GM12878 (cell line): ENCODE measurements at regions of chr1 and their contacts with region 1.

Region 1: GRCh38 chr1:165827268-165828102 is at the start of gene UCK2:
- DNase-seq: no peak
- ATAC-seq: peak; percentile 87
- H3K4me3 ChIP-seq: peak within 1 kb of the TSS; percentile 86
- H3K27ac ChIP-seq: peak within 1 kb of the TSS; percentile 86
- H3K4me1 ChIP-seq: no peaks in the 10 kb centered on the region; the same call in 1 of the 2 replicates
- H3K27me3 ChIP-seq: no peaks in the 10 kb centered on the region
- CTCF ChIP-seq: peak in 1 of 3 experiments; percentile 9; a peak in 2 of 6 replicates
- EP300 ChIP-seq: no peak
- POLR2A ChIP-seq: peak; percentile 66
- RAD21 ChIP-seq: peak; percentile 43; the same call in 1 of the 2 replicates
- polyA plus RNA-seq, gene UCK2: 67.0 to 74.3 TPM

Region 2: DNA sequence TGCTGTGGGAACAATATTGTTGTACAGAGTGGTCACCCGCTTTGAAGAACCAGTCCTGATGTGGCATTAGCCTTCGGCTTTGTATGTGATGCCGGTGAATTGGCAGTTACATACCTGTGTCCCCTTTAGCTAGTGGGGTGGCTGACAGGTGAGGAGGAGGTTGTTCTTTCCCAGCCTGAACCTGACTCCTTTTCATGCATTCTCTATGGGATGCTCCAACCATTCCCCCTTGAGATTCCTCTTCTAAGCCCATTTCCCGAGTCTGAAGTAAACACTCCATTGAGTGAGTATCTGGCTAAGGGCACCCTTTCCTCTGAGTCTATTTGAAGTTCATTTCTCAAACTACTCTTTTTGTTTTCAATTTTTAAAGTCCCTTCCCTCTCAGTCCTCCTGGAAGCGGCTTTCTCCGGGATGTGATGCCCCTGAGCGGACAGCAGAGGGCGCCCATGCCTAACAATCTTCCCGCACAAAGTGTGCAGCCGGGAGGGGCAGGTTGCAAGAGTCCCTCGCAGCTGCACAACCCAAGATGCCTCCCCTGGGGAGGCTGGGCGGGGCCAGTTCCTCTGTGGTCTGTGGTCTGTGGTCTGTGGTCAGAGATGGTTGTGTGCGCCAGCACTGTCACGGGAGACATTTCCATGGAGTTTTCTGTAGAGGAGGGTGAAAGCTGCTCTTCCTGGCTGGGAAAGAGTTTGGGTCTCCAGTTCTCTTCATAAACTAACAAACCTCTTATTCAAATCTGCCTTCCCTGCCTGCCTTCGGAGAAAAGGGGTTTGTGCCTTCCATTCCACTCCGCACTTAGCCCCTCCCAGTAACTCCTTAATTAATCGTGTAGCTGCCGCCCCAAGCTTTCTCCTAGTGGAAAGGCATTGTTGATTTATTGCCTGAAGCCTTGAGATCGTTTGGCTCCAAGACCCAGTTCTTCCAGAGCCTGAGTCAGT is 434.6 kb before region 1 on chr1:
- CTCF ChIA-PET with region 1: no interaction called
- POLR2A ChIA-PET with region 1: no interaction called
- RAD21 ChIA-PET with region 1: no interaction called
- SMC1A ChIA-PET with region 1: interaction called, 3 read pairs
- in situ Hi-C with region 1: no loop called
- intact Hi-C with region 1: loop called (anchors 10 kb)
- DNase-seq: peak; percentile 64
- ATAC-seq: peak; percentile 99
- H3K4me3 ChIP-seq: no peak overlapping the region
- H3K27ac ChIP-seq: no peak overlapping the region
- H3K4me1 ChIP-seq: peaks cover 9% of the 10 kb centered on the region; the same call in 1 of the 2 replicates
- H3K27me3 ChIP-seq: peaks cover 1 to 3% of the 10 kb centered on the region in 2 experiments; a peak in 2 of 4 replicates
- CTCF ChIP-seq: peak; percentile 95 to 96 (median 95)
- EP300 ChIP-seq: peak in 1 of 2 experiments; percentile 15; a peak in 2 of 4 replicates
- POLR2A ChIP-seq: no peak
- RAD21 ChIP-seq: peak; percentile 88

Region 3: GRCh38 chr1:165815725-165816124 is 11.8 kb before region 1 on chr1:
- CTCF ChIA-PET with region 1: no interaction called
- POLR2A ChIA-PET with region 1: interaction called, 3 read pairs
- RAD21 ChIA-PET with region 1: no interaction called
- SMC1A ChIA-PET with region 1: interaction called, 11 read pairs
- in situ Hi-C with region 1: no loop called
- intact Hi-C with region 1: no loop called
- DNase-seq: no peak
- ATAC-seq: no peak
- H3K4me3 ChIP-seq: no peak overlapping the region
- H3K27ac ChIP-seq: no peak overlapping the region
- H3K4me1 ChIP-seq: no peaks in the 10 kb centered on the region
- H3K27me3 ChIP-seq: no peaks in the 10 kb centered on the region
- CTCF ChIP-seq: no peak
- EP300 ChIP-seq: no peak
- POLR2A ChIP-seq: no peak
- RAD21 ChIP-seq: no peak

Region 4: DNA sequence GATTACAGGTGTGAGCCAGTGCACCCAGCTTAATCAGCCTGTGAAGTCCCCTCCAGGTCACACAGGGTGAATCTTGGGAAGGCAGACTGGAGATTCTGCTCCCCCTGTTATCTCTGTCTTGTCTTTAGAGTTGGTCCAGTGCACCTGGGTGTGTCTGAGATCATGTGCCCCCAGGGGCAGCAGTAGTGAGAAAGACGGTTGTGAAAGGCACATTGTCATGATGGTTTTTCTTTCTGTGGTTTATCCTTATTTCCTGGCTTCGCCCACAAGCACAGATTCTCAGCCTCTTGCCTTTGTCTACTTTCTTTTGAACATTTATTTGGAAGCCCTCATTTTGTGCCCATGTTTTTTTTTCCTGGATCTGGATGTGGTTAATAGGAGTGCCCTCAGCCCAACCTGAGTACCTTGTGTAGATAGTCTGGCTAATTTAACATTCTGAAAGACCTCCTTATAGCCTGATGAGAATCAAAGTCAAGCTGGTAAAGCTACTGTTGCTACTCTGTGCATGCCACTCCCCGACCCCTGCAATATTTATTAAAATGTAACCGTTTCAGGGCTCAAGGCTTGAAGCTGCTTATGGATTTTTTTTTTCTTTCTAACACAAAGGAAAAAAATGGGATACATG is 23.7 kb after region 1 on chr1:
- CTCF ChIA-PET with region 1: interaction called, 32 read pairs
- POLR2A ChIA-PET with region 1: interaction called, 44 read pairs
- RAD21 ChIA-PET with region 1: interaction called, 73 read pairs
- SMC1A ChIA-PET with region 1: interaction called, 145 read pairs
- in situ Hi-C with region 1: no loop called
- intact Hi-C with region 1: loop called (anchors 2 kb)
- DNase-seq: no peak
- ATAC-seq: peak; percentile 88
- H3K4me3 ChIP-seq: no peak overlapping the region
- H3K27ac ChIP-seq: peak overlapping the region; percentile 37; the same call in 1 of the 2 replicates
- H3K4me1 ChIP-seq: peaks cover 36% of the 10 kb centered on the region
- H3K27me3 ChIP-seq: no peaks in the 10 kb centered on the region
- CTCF ChIP-seq: no peak
- EP300 ChIP-seq: no peak
- POLR2A ChIP-seq: no peak
- RAD21 ChIP-seq: no peak

Region 5: GRCh38 chr1:165862448-165862847 is 35.0 kb after region 1 on chr1:
- CTCF ChIA-PET with region 1: interaction called, 32 read pairs
- POLR2A ChIA-PET with region 1: interaction called, 20 read pairs
- RAD21 ChIA-PET with region 1: interaction called, 25 read pairs
- SMC1A ChIA-PET with region 1: interaction called, 129 read pairs
- in situ Hi-C with region 1: no loop called
- intact Hi-C with region 1: loop called (anchors 2 kb)
- DNase-seq: no peak
- ATAC-seq: peak; percentile 55
- H3K4me3 ChIP-seq: no peak overlapping the region
- H3K27ac ChIP-seq: peak overlapping the region; percentile 27
- H3K4me1 ChIP-seq: peaks cover 22% of the 10 kb centered on the region
- H3K27me3 ChIP-seq: no peaks in the 10 kb centered on the region
- CTCF ChIP-seq: no peak
- EP300 ChIP-seq: no peak
- POLR2A ChIP-seq: no peak
- RAD21 ChIP-seq: no peak

Region 6: GRCh38 chr1:165884690-165885304 is 57.3 kb after region 1 on chr1:
- CTCF ChIA-PET with region 1: interaction called, 12 read pairs
- POLR2A ChIA-PET with region 1: interaction called, 16 read pairs
- RAD21 ChIA-PET with region 1: interaction called, 37 read pairs
- SMC1A ChIA-PET with region 1: interaction called, 47 read pairs
- in situ Hi-C with region 1: no loop called
- intact Hi-C with region 1: loop called (anchors 2 kb)
- DNase-seq: no peak
- ATAC-seq: peak; percentile 70
- H3K4me3 ChIP-seq: no peak overlapping the region
- H3K27ac ChIP-seq: peak overlapping the region; percentile 64
- H3K4me1 ChIP-seq: peaks cover 53% of the 10 kb centered on the region
- H3K27me3 ChIP-seq: no peaks in the 10 kb centered on the region
- CTCF ChIP-seq: no peak
- EP300 ChIP-seq: no peak
- POLR2A ChIP-seq: no peak
- RAD21 ChIP-seq: no peak